Activated CD4-positive, alpha-beta T cell treated with anti-CD3 and anti-CD28 coated beads, Interleukin-2, amount 10 ng/mL, durations not matched to agents 24 days and 14 days (primary cell): ENCODE measurements at regions of chr1 and their contacts with region 1.

Region 1: GRCh38 chr1:207828485-207829158 is 76.8 kb downstream of the CD46 start:
- DNase-seq: peak; percentile 87
- H3K4me3 Mint-ChIP-seq: peak overlapping the region; percentile 5
- H3K27ac Mint-ChIP-seq: peak overlapping the region; percentile 74
- H3K4me1 Mint-ChIP-seq: peaks cover 84% of the 10 kb centered on the region
- H3K27me3 Mint-ChIP-seq: peaks cover 2% of the 10 kb centered on the region

Region 2: GRCh38 chr1:206563367-206564207 is 1265.0 kb before region 1 on chr1:
- intact Hi-C with region 1: no loop called
- DNase-seq: no peak
- H3K4me3 Mint-ChIP-seq: peak overlapping the region; percentile 98
- H3K27ac Mint-ChIP-seq: peak overlapping the region; percentile 94
- H3K4me1 Mint-ChIP-seq: peaks cover 90% of the 10 kb centered on the region
- H3K27me3 Mint-ChIP-seq: no peaks in the 10 kb centered on the region

Region 3: DNA sequence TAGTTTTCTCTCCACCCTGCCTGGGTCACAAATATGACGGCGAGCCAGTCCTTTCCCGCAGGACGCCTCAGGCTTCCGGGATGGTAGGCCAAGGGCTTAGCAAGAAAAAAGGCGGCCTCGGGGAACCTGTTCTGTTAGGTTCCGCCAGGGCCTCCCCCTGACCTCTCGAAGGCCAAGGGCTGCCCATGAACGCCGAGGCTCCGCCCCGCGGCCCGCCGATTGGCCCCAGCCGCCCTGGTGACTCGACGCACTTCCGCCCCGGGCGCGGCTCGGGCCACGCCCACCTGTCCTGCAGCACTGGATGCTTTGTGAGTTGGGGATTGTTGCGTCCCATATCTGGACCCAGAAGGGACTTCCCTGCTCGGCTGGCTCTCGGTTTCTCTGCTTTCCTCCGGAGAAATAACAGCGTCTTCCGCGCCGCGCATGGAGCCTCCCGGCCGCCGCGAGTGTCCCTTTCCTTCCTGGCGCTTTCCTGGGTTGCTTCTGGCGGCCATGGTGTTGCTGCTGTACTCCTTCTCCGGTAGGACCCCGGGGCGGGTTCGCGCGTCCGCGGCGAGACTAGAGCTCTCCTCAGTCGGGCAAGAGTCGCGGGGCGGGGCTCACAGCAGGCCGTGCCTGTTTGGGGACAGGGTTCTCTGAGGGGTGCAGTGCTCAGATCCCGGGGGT is 76.7 kb before region 1 on chr1 and contains the start of gene CD46:
- intact Hi-C with region 1: loop called (anchors 2 kb)
- DNase-seq: peak; percentile 99
- H3K4me3 Mint-ChIP-seq: peak within 1 kb of the TSS; percentile 98
- H3K27ac Mint-ChIP-seq: peak within 1 kb of the TSS; percentile 98
- H3K4me1 Mint-ChIP-seq: peaks cover 59% of the 10 kb centered on the region
- H3K27me3 Mint-ChIP-seq: no peaks in the 10 kb centered on the region
- total RNA-seq, gene CD46: 96.3 and 107 TPM in 2 replicates

Region 4: DNA sequence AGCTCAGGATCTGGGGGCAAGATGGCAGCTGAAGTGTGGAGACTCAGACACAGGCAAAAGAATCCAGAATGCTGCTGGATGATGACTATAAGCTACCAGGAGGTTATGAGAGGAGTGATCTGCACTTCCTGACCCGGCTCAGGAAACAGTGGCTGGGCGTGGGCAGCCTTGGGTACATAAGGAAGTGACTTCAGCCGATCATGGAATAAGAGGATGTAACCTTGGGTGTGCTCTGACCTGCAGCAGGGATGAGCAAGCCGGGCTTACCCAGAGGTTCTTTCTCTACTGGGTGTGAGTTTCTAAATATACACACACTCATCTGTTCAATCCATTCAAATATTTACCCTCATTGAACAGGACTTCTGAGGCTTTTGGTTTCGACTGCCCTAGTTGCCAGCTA is 19.6 kb after region 1 on chr1:
- intact Hi-C with region 1: loop called (anchors 1 kb)
- DNase-seq: peak; percentile 78
- H3K4me3 Mint-ChIP-seq: peak overlapping the region; percentile 57
- H3K27ac Mint-ChIP-seq: peak overlapping the region; percentile 51
- H3K4me1 Mint-ChIP-seq: peaks cover 53% of the 10 kb centered on the region
- H3K27me3 Mint-ChIP-seq: no peaks in the 10 kb centered on the region

Region 5: DNA sequence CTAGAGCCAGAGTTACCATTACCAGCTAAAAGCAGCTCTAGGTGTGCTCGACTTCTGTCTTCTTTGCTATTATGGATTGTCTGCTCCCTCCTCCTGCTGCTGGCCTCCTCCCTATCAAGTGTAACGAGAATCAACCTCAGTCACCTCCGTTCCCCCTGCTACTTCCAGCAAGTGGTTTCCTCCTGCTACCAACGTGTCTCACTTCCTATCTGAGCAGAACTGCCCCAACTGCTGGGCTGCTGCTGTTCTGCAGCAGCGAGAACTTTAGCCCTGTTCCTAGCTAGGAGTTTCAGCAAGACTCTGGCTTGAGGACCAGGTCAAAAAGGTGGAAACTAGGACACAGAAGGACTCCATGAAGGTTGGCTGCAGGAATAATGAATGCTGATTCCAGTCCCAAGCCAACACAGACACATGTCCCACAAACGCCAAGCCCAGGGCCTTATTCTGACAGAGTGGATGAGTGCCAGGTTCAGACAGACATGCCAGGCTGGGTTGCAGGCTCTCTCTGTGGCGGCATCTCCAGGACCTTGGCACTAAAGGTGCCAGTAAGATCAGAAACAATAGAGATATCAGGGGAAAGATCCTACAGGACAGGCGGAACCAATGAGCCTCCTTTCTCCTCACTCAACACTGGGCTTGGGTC is 35.4 kb after region 1 on chr1:
- intact Hi-C with region 1: loop called (anchors 1 kb)
- DNase-seq: peak; percentile 87
- H3K4me3 Mint-ChIP-seq: peak overlapping the region; percentile 74
- H3K27ac Mint-ChIP-seq: peak overlapping the region; percentile 90
- H3K4me1 Mint-ChIP-seq: peaks cover 60% of the 10 kb centered on the region
- H3K27me3 Mint-ChIP-seq: no peaks in the 10 kb centered on the region

Region 6: GRCh38 chr1:207868774-207869721 is 40.4 kb after region 1 on chr1:
- intact Hi-C with region 1: loop called (anchors 1 kb)
- DNase-seq: peak; percentile 94
- H3K4me3 Mint-ChIP-seq: peak overlapping the region; percentile 93
- H3K27ac Mint-ChIP-seq: peak overlapping the region; percentile 91
- H3K4me1 Mint-ChIP-seq: peaks cover 77% of the 10 kb centered on the region
- H3K27me3 Mint-ChIP-seq: no peaks in the 10 kb centered on the region

Region 7: GRCh38 chr1:207885129-207886032 is 56.8 kb after region 1 on chr1:
- intact Hi-C with region 1: loop called (anchors 1 kb)
- DNase-seq: peak; percentile 90
- H3K4me3 Mint-ChIP-seq: no peak overlapping the region
- H3K27ac Mint-ChIP-seq: peak overlapping the region; percentile 97
- H3K4me1 Mint-ChIP-seq: peaks cover 35% of the 10 kb centered on the region
- H3K27me3 Mint-ChIP-seq: no peaks in the 10 kb centered on the region

Region 8: DNA sequence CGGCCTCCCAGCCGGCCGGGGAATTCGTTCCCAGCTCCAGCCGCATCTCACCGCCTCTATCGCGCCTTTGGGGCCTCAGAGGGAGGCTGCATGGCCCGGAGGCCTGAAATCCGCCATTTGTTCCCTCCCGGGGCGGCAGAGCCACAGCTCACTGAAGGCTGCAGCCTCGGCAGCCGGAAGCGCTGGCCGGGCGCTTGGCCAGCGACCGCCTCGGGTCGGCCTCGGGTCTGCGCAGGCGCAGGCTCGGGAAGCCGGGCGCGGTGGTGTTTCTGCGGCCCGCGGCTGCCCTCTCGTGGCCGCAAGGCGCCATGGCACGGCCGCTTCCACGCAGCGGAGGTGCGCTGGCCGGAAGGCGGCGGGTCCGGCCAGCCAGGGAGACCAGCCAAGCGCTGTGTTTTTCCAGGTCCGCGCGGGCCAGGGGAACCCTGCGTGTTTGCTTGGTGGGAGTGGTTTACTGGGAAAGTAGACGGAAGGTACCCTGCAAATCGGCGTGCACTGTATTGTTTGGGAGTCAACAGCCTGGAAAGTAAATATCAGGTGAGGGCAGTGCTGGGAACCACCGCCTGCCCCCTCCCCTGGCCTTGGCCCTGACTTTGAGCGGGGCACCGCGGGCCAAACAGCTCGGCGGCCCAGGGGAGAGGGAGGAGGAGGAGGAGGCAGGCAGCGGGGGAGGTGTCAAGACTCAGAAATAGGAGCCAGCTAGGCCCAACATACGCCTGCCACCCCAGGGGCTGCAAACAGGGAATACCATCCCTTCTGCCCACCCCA is 135.0 kb after region 1 on chr1:
- intact Hi-C with region 1: loop called (anchors 1 kb)
- DNase-seq: peak; percentile 96
- H3K4me3 Mint-ChIP-seq: peak overlapping the region; percentile 84
- H3K27ac Mint-ChIP-seq: no peak overlapping the region
- H3K4me1 Mint-ChIP-seq: peaks cover 12% of the 10 kb centered on the region
- H3K27me3 Mint-ChIP-seq: peaks cover 42% of the 10 kb centered on the region